Naive thymus-derived CD4-positive, alpha-beta T cell (primary cell): ENCODE measurements at regions of chr6 and their contacts with region 1.

Region 1: DNA sequence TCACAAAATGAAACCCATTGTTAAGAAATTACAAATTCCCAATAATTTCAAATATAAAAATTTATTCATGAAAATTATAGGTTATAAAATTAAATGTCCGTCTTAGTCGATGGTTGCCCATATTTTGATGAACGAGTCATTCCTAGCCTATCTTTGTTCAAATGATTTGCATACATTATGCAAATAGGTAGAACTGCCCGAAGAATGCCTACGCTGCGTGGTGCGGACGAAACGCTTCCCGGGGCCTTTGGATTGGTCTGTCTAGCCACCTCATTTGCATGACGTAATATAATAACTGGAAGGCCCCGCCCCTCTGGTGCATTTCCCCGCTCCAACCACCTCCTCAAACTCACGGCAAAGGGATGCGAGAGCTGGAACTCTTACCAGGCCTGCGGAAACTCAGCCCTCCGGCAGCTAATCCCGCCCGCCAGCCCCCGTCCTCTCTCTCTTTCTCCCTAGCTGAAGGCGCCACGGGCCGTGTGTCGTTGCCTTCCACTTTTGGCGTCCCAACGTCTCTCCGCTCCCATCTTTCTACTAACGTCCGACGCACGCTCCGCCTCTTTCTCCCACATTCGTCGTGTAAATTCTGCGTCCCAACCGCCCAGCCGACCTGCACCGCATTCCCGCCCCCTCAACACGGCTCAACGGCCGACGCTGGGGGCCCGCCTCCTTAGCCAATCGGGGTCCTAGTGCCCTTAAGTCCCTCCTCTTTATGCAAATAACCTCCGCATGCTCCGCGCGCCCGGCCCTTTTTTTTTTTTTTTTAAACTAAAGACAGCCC is 520 bp upstream of the PRRC2A start:
- DNase-seq: peak; percentile 81 to 97 (median 94)
- ATAC-seq: peak; percentile 88
- H3K4me3 ChIP-seq: peak overlapping the region; percentile 90
- H3K4me3 Mint-ChIP-seq: peak overlapping the region; percentile 87 to 97 (median 93)
- H3K27ac ChIP-seq: peak overlapping the region; percentile 96
- H3K27ac Mint-ChIP-seq: peak overlapping the region; percentile 95 to 99 (median 96)
- H3K4me1 ChIP-seq: peaks cover 14 to 23% of the 10 kb centered on the region in 2 donors
- H3K4me1 Mint-ChIP-seq: peaks cover 26 to 60% (median 53%) of the 10 kb centered on the region in 7 donors
- H3K27me3 ChIP-seq: no peaks in the 10 kb centered on the region
- H3K27me3 Mint-ChIP-seq: no peaks in the 10 kb centered on the region

Region 2: DNA sequence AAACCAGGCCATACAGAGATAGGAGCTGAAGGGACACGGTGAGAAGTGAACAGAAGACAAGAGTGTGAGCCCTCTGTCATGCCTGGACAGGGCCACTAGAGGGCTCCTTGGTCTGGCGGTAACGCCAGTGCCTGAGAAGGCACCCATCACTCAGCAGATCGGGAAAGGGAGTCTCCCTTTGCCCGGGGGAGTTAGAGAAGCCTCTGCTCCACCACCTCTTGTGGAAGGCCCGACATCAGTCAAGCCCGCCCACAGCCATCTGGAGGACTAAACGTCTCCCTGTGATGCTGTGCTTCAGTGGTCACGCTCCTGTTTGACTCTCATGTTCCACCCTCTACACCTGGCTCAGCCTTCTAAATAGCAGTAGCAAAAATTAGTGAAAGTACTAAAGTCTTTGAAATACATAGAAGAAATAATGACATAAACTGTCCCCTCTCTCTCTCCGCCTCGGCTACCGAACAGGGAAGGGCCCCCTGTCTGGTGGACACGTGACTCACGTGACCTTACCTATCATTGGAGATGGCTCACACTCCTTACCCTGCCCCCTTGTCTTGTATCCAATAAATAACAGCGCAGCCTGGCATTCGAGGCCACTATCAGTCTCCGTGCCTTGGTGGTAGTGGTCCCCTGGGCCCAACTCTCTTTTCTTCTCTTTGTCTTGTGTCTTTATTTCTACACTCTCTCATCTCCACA is 1208.3 kb before region 1 on chr6:
- CTCF ChIA-PET with region 1: no interaction called
- POLR2A ChIA-PET with region 1: no interaction called
- intact Hi-C with region 1: no loop called
- DNase-seq: peak; percentile 26 to 63 (median 52)
- ATAC-seq: peak; percentile 73
- H3K4me3 ChIP-seq: no peak overlapping the region
- H3K4me3 Mint-ChIP-seq: peak overlapping the region; percentile 2 to 69 (median 52)
- H3K27ac ChIP-seq: no peak overlapping the region
- H3K27ac Mint-ChIP-seq: peak overlapping the region in 2 of 9 donors; percentile 53 to 76
- H3K4me1 ChIP-seq: peaks cover 3 to 5% of the 10 kb centered on the region in 2 donors
- H3K4me1 Mint-ChIP-seq: peaks cover 4 to 11% (median 8%) of the 10 kb centered on the region in 7 donors
- H3K27me3 ChIP-seq: peaks cover 0 to 7% of the 10 kb centered on the region in 2 donors
- H3K27me3 Mint-ChIP-seq: peaks cover 45 to 77% (median 66%) of the 10 kb centered on the region in 5 donors

Region 3: GRCh38 chr6:31197559-31198305 is 422.3 kb before region 1 on chr6:
- CTCF ChIA-PET with region 1: no interaction called
- POLR2A ChIA-PET with region 1: no interaction called
- intact Hi-C with region 1: loop called in 1 of 2 experiments (anchors 1 kb)
- DNase-seq: peak; percentile 78 to 98 (median 96)
- ATAC-seq: peak; percentile 88
- H3K4me3 ChIP-seq: peak overlapping the region; percentile 82
- H3K4me3 Mint-ChIP-seq: peak overlapping the region; percentile 84 to 99 (median 89)
- H3K27ac ChIP-seq: peak overlapping the region; percentile 100
- H3K27ac Mint-ChIP-seq: peak overlapping the region; percentile 82 to 100 (median 97)
- H3K4me1 ChIP-seq: peaks cover 27 to 28% of the 10 kb centered on the region in 2 donors
- H3K4me1 Mint-ChIP-seq: peaks cover 47 to 69% (median 59%) of the 10 kb centered on the region in 7 donors
- H3K27me3 ChIP-seq: no peaks in the 10 kb centered on the region
- H3K27me3 Mint-ChIP-seq: peaks cover 0 to 3% (median 0%) of the 10 kb centered on the region in 5 donors

Region 4: GRCh38 chr6:31580807-31581433 is 39.1 kb before region 1 on chr6:
- CTCF ChIA-PET with region 1: interaction called, 3 read pairs
- POLR2A ChIA-PET with region 1: interaction called, 3,078 read pairs
- intact Hi-C with region 1: loop called in 1 of 2 experiments (anchors 1 kb)
- DNase-seq: peak; percentile 79 to 96 (median 88)
- ATAC-seq: peak; percentile 87
- H3K4me3 ChIP-seq: peak overlapping the region; percentile 97
- H3K4me3 Mint-ChIP-seq: peak overlapping the region; percentile 88 to 100 (median 99)
- H3K27ac ChIP-seq: peak overlapping the region; percentile 97
- H3K27ac Mint-ChIP-seq: peak overlapping the region; percentile 94 to 100 (median 97)
- H3K4me1 ChIP-seq: peaks cover 54 to 60% of the 10 kb centered on the region in 2 donors
- H3K4me1 Mint-ChIP-seq: peaks cover 47 to 80% (median 63%) of the 10 kb centered on the region in 7 donors
- H3K27me3 ChIP-seq: no peaks in the 10 kb centered on the region
- H3K27me3 Mint-ChIP-seq: no peaks in the 10 kb centered on the region

Region 5: GRCh38 chr6:31665501-31666336 is 45.7 kb after region 1 on chr6 and contains the start of gene CSNK2B:
- CTCF ChIA-PET with region 1: no interaction called
- POLR2A ChIA-PET with region 1: interaction called, 7 read pairs
- intact Hi-C with region 1: loop called (anchors 1 kb)
- DNase-seq: peak; percentile 87 to 99 (median 98)
- ATAC-seq: peak; percentile 94
- H3K4me3 ChIP-seq: peak within 1 kb of the TSS; percentile 91
- H3K4me3 Mint-ChIP-seq: peak within 1 kb of the TSS; percentile 93 to 99 (median 96)
- H3K27ac ChIP-seq: peak within 1 kb of the TSS; percentile 97
- H3K27ac Mint-ChIP-seq: peak within 1 kb of the TSS; percentile 94 to 99 (median 98)
- H3K4me1 ChIP-seq: peaks cover 33 to 43% of the 10 kb centered on the region in 2 donors
- H3K4me1 Mint-ChIP-seq: peaks cover 25 to 75% (median 64%) of the 10 kb centered on the region in 7 donors
- H3K27me3 ChIP-seq: no peaks in the 10 kb centered on the region
- H3K27me3 Mint-ChIP-seq: peaks cover 0 to 2% (median 0%) of the 10 kb centered on the region in 5 donors
- total RNA-seq, gene CSNK2B: 101 to 215 (median 133) TPM

Region 6: DNA sequence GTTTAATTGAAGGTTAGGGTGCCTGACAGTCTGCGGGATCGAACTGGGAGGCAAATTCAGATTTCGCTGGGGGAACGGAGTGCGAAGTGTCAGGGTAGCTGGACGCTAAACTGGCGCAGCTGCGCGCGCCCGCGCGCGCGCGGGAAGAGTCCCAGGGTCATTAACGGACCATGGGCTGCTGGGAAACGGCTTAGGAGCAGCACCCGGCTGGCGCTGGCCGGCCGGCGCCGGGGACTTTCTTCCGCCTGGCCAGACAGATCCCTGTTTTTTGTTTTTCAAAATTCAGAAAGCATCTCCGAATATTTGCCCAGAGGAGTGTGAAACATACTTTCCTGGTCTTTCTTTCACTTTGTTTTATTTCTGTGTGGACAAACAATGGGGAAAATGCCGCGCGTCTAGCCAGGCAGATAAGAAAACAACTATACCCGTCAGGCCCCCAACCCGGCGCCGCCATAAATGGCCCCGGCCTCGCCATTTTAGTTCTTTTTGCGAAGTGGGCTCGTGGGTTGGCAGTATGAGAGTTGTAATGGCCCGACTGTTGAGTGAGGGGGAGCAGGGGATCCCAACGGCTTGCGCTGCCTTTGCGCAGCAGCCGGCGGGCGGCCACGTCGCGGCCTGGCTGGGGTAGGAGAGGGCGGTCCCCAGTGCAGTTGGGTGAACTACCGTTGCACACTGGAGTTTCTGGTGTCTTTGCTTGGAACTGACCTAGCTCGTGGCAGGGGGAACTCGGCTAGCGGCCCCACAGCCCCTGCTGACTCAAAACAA is 214.6 kb after region 1 on chr6:
- CTCF ChIA-PET with region 1: no interaction called
- POLR2A ChIA-PET with region 1: interaction called, 4 read pairs
- intact Hi-C with region 1: loop called (anchors 1 kb)
- DNase-seq: peak; percentile 77 to 84 (median 82)
- ATAC-seq: peak; percentile 82
- H3K4me3 ChIP-seq: peak overlapping the region; percentile 73
- H3K4me3 Mint-ChIP-seq: peak overlapping the region; percentile 84 to 99 (median 99)
- H3K27ac ChIP-seq: peak overlapping the region; percentile 92
- H3K27ac Mint-ChIP-seq: peak overlapping the region; percentile 91 to 100 (median 99)
- H3K4me1 ChIP-seq: peaks cover 40 to 48% of the 10 kb centered on the region in 2 donors
- H3K4me1 Mint-ChIP-seq: peaks cover 31 to 64% (median 53%) of the 10 kb centered on the region in 7 donors
- H3K27me3 ChIP-seq: no peaks in the 10 kb centered on the region
- H3K27me3 Mint-ChIP-seq: no peaks in the 10 kb centered on the region

Region 7: DNA sequence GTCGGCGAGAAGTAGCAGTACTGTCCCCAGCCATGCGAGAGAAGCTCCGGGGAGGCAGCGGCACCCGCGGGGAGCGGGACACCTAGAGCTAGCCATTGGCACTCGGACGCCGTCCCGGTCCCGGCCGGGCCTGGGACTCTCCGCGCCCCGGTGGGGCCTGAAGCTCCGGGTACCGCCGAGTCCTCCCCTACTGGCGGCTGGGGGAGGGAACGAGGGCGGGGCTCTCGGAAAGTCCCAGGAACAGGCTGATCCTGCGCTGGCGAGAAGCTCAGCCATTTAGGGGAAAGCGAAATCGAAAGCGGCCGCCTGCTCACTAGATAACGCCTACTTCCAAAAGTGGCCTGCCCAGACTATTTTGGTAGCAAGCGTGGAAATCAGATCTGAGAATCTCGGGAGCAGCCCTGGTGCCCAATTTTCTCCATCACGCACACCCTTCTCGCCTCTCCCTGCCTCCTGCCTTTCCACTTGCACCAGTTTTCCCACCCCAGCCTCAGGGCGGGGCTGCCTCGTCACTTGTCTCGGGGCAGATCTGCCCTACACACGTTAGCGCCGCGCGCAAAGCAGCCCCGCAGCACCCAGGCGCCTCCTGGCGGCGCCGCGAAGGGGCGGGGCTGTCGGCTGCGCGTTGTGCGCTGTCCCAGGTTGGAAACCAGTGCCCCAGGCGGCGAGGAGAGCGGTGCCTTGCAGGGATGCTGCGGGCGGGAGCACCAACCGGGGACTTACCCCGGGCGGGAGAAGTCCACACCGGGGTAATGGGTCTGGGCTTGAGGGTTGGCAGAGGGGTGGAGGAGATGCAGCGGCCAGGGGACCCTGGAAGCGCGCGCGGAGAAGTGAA is 1233.8 kb after region 1 on chr6 and contains the starts of genes PSMB9 and TAP1:
- CTCF ChIA-PET with region 1: no interaction called
- POLR2A ChIA-PET with region 1: no interaction called
- intact Hi-C with region 1: loop called in 1 of 2 experiments (anchors 5 kb)
- DNase-seq: peak; percentile 92 to 97 (median 94)
- ATAC-seq: peak; percentile 92
- H3K4me3 ChIP-seq: peak within 1 kb of the TSS; percentile 91
- H3K4me3 Mint-ChIP-seq: peak within 1 kb of the TSS; percentile 96 to 100 (median 100)
- H3K27ac ChIP-seq: peak within 1 kb of the TSS; percentile 100
- H3K27ac Mint-ChIP-seq: peak within 1 kb of the TSS; percentile 97 to 100 (median 100)
- H3K4me1 ChIP-seq: peaks cover 45 to 57% of the 10 kb centered on the region in 2 donors
- H3K4me1 Mint-ChIP-seq: peaks cover 61 to 80% (median 72%) of the 10 kb centered on the region in 7 donors
- H3K27me3 ChIP-seq: no peaks in the 10 kb centered on the region
- H3K27me3 Mint-ChIP-seq: no peaks in the 10 kb centered on the region
- total RNA-seq, gene PSMB9: 70.3 to 452 (median 90.5) TPM
- total RNA-seq, gene TAP1: 92.1 to 500 (median 103) TPM